ENCODE measurements at regions of chr11 and their contacts with region 1.

Region 1: GRCh38 chr11:65027213-65028067 is at the start of gene SNX15:
- DNase-seq: peak; percentile 98
- H3K4me3 ChIP-seq: peak within 1 kb of the TSS; percentile 65 to 74 (median 70)
- H3K27ac ChIP-seq: peak within 1 kb of the TSS; percentile 84 to 92 (median 89)
- H3K4me1 ChIP-seq: peaks cover 11 to 40% (median 27%) of the 10 kb centered on the region in 4 donors
- H3K27me3 ChIP-seq: no peaks in the 10 kb centered on the region
- CTCF ChIP-seq: peak; percentile 57 to 79 (median 70)
- EP300 ChIP-seq: no peak
- POLR2A ChIP-seq: no peak
- total RNA-seq, gene SNX15: 21.2 to 57.1 (median 33.1) TPM

Region 2: DNA sequence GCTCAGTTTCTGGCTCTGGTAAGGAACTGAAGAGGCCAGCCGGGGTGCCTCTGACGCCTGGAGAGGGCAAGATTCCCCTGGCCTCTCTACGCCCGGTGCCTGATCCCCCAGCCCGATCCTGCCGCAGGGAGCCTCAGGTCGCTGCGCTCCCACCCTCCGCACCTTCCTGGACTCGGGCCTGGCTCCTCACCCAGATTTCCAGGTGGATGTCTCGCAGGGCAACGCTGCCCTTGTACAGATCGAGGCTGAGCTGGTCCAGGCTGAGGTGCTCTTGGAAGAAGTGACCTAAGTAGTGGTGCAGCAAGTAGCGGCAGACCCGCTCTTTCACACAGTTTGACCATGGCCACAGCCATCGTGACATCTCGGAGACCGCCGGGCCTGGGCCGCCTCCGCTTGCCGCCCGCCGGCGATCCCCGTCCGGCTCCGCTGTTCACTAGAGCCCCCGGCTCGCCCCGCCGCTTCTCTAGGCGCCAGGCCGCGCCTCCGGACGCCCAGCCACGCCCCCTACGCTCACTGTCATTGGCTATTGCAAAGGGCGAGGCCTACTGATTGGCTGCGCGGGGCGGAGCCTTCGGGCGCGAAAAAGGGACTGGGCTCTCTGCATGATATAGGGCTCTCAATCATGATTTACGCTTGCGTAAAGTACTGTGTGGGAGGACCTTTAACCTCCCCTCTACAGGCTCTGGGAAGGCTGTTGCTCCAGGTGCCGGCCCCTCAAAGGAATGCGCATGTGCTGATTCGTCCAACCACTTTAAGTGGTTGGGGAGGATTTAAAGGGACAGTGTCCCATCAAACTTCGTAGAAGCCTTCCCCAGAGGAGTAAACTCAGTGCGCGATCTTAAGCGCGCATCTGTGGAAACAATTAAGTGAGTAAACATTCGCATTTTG is 110.4 kb before region 1 on chr11 and contains the start of gene ATG2A:
- intact Hi-C with region 1: loop called (anchors 5 kb)
- DNase-seq: peak; percentile 100
- H3K4me3 ChIP-seq: peak within 1 kb of the TSS; percentile 75 to 98 (median 92)
- H3K27ac ChIP-seq: peak within 1 kb of the TSS; percentile 82 to 88 (median 86)
- H3K4me1 ChIP-seq: peaks cover 23 to 41% (median 34%) of the 10 kb centered on the region in 4 donors
- H3K27me3 ChIP-seq: no peaks in the 10 kb centered on the region
- CTCF ChIP-seq: peak in 1 of 3 experiments; percentile 22
- EP300 ChIP-seq: no peak
- POLR2A ChIP-seq: peak; percentile 81
- total RNA-seq, gene ATG2A: 19.9 to 28.7 (median 26.1) TPM